ENCODE measurements at regions of chr22 and their contacts with region 1.

Region 1: GRCh38 chr22:19598054-19598855 is 74.0 kb upstream of the CLDN5 start:
- DNase-seq: no peak
- ATAC-seq: peak; percentile 31 to 81
- H3K4me3 ChIP-seq: no peak overlapping the region
- H3K27ac ChIP-seq: no peak overlapping the region
- H3K4me1 ChIP-seq: no peaks in the 10 kb centered on the region
- H3K27me3 ChIP-seq: no peaks in the 10 kb centered on the region

Region 2: GRCh38 chr22:19495562-19496323 is 102.5 kb before region 1 on chr22:
- intact Hi-C with region 1: loop called in 1 of 4 experiments (anchors 10 kb)
- DNase-seq: no peak
- ATAC-seq: no peak
- H3K4me3 ChIP-seq: no peak overlapping the region
- H3K27ac ChIP-seq: no peak overlapping the region
- H3K4me1 ChIP-seq: no peaks in the 10 kb centered on the region
- H3K27me3 ChIP-seq: no peaks in the 10 kb centered on the region

Region 3: DNA sequence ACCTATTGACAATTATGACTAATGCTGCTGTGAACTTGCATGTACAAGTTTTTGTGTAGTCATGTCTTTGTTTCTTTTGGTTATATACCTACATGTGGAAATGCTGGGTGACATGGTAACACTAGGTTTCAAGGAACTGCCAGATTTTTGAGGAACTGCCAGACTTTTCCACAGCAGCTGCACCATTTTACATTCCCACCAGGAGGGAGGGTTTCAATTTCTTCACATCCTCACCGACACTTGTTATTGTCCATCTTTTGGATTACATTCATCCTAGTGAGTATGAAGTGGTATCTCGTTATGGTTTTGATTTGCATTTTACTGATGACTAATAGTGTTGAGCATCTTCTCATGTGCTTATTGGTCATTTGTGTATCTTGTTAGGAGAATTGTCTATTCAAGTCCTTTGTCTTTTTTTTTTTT is 87.3 kb before region 1 on chr22:
- intact Hi-C with region 1: no loop called
- DNase-seq: no peak
- ATAC-seq: no peak
- H3K4me3 ChIP-seq: no peak overlapping the region
- H3K27ac ChIP-seq: no peak overlapping the region
- H3K4me1 ChIP-seq: no peaks in the 10 kb centered on the region
- H3K27me3 ChIP-seq: no peaks in the 10 kb centered on the region

Measured in right cardiac atrium (tissue), 5 donors.